CD8-positive, alpha-beta T cell (primary cell): ENCODE measurements at regions of chr17 and their contacts with region 1.

Region 1: DNA sequence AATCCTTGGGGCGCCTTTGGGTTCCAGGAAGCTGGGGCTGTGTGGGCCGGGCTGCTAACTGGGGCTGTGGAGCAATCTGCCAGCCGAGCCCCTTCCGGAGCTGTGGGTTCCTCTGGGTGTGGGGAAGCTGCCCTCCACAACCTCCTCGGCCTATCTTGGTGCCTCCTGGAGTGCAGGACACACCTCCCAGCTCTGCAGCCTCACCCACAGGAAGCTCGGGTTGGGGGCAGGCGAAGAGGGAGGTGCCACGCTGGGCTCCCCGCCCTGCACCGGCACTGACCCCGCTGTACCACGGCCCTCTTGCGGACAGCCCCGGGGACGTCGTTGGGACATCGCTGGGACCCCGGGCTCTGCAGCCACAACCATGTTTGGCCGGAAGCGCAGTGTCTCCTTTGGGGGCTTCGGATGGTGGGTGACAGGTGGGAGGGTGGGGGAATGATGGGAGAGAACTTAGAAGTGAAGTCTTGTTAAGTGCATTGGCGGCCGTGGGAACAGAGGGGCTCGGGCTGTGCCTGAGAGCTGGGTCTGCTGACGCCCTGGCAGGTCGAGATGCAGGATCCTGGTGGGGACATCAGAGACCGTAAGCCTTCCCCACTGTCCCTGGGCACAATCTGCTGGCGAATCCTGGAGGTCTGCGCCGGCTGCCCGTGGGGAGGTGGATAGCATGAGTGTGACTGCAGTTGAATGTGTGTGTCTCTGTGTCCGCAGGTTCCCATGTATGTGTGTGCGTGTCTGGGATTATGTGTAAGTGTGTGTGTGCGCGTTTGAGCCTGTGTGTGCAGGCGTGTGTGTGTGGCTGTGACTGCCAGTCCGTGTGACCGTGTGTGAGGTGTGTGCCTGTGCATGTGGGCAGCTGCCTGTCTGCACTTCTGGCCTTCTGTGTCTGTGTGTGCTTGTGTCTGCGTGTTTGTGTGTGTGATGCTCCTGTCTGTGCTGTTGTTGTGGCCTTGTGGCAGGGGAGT is at the start of gene RAP1GAP2:
- DNase-seq: peak; percentile 44 to 92 (median 78)
- ATAC-seq: peak; percentile 81
- H3K4me3 ChIP-seq: peak within 1 kb of the TSS; percentile 56 to 82
- H3K4me3 Mint-ChIP-seq: peak within 1 kb of the TSS; percentile 86
- H3K27ac ChIP-seq: peak within 1 kb of the TSS; percentile 6 to 30
- H3K27ac Mint-ChIP-seq: peak within 1 kb of the TSS; percentile 78
- H3K4me1 ChIP-seq: peaks cover 74% of the 10 kb centered on the region
- H3K4me1 Mint-ChIP-seq: peaks cover 73% of the 10 kb centered on the region
- H3K27me3 ChIP-seq: no peaks in the 10 kb centered on the region
- H3K27me3 Mint-ChIP-seq: peaks cover 5% of the 10 kb centered on the region
- CTCF ChIP-seq: no peak
- total RNA-seq, gene RAP1GAP2: 18.9 to 19.9 TPM

Region 2: GRCh38 chr17:2580661-2581060 is 215.8 kb before region 1 on chr17:
- CTCF ChIA-PET with region 1: no interaction called
- POLR2A ChIA-PET with region 1: no interaction called
- intact Hi-C with region 1: no loop called
- DNase-seq: no peak
- ATAC-seq: no peak
- H3K4me3 ChIP-seq: no peak overlapping the region
- H3K4me3 Mint-ChIP-seq: no peak overlapping the region
- H3K27ac ChIP-seq: no peak overlapping the region
- H3K27ac Mint-ChIP-seq: no peak overlapping the region
- H3K4me1 ChIP-seq: no peaks in the 10 kb centered on the region
- H3K4me1 Mint-ChIP-seq: no peaks in the 10 kb centered on the region
- H3K27me3 ChIP-seq: peaks cover 0 to 3% of the 10 kb centered on the region in 2 experiments
- H3K27me3 Mint-ChIP-seq: peaks cover 4% of the 10 kb centered on the region
- CTCF ChIP-seq: no peak

Region 3: DNA sequence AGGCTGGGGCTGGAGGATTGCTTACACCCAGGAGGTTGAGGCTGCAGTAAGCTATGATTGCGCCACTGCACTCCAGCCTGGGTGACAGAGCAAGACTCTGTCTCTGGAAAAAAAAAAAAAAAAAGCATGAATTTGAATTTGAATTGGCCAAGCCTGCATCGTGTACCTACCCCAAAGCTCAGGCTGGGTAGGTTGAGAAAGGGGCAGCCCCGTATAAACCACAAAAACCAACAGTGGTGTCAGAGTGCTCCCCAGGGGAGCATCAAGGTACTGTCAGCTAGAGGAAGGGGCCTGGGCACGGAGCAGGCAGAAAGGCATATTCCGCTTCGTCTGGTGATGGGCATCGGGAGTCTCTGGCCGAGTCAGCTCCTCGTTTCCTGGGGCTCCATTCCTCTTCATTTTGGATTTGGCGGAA is 40.7 kb after region 1 on chr17:
- CTCF ChIA-PET with region 1: interaction called, 11 read pairs
- POLR2A ChIA-PET with region 1: interaction called, 3 read pairs
- intact Hi-C with region 1: no loop called
- DNase-seq: peak in 7 of 9 experiments; percentile 12 to 75 (median 50)
- ATAC-seq: peak; percentile 97
- H3K4me3 ChIP-seq: no peak overlapping the region
- H3K4me3 Mint-ChIP-seq: no peak overlapping the region
- H3K27ac ChIP-seq: no peak overlapping the region
- H3K27ac Mint-ChIP-seq: no peak overlapping the region
- H3K4me1 ChIP-seq: peaks cover 6% of the 10 kb centered on the region
- H3K4me1 Mint-ChIP-seq: peaks cover 5% of the 10 kb centered on the region
- H3K27me3 ChIP-seq: no peaks in the 10 kb centered on the region
- H3K27me3 Mint-ChIP-seq: no peaks in the 10 kb centered on the region
- CTCF ChIP-seq: peak; percentile 31